ENCODE measurements at regions of chr2 and their contacts with region 1.

Region 1: DNA sequence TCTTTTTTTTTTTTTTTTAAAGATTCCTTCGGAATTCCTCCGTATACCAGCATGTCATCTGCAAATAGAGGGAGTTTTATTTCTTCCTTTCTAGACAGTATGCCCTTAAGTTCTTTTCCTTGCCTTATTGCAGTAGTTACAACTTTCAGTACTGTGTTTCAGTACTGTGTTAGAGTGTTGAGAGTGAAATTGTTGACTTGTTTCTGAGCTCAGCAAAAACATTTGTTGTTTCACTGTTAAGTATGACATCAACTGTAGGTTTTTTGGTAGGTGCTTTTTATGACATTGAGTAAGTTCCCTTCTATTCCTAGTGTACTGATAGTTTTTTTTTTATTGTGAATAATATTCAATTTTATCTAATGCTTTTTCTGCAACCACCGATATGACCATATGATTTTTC is 43.9 kb downstream of the ACVR2A start:
- DNase-seq: no peak
- H3K4me3 ChIP-seq: no peak overlapping the region
- H3K27ac ChIP-seq: no peak overlapping the region
- H3K4me1 ChIP-seq: peaks cover 5 to 33% of the 10 kb centered on the region in 2 donors
- H3K27me3 ChIP-seq: no peaks in the 10 kb centered on the region
- CTCF ChIP-seq: no peak
- POLR2A ChIP-seq: no peak

Region 2: DNA sequence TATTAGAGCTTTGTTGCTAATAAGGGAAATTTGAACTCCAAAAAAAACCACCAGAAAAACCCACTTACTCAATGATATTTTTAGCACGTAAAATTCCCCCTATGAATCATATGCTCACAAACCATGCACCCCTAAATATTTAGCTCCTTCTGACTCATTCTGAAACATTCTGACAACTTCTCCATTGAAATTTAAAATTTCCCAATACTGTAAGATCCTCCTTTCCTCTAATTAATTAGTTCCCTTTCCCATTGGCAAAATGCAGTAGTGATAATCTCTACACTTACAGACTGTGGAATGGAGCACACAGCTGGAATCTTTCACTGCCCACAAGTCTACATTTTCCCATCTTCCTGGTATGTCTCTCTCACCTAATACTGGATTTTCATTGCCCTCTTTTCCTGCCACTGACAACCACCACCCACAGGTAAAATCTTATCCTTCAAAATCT is 259.7 kb before region 1 on chr2:
- intact Hi-C with region 1: no loop called
- DNase-seq: no peak
- H3K4me3 ChIP-seq: no peak overlapping the region
- H3K27ac ChIP-seq: no peak overlapping the region
- H3K4me1 ChIP-seq: no peaks in the 10 kb centered on the region
- H3K27me3 ChIP-seq: no peaks in the 10 kb centered on the region
- CTCF ChIP-seq: no peak
- POLR2A ChIP-seq: no peak

Region 3: DNA sequence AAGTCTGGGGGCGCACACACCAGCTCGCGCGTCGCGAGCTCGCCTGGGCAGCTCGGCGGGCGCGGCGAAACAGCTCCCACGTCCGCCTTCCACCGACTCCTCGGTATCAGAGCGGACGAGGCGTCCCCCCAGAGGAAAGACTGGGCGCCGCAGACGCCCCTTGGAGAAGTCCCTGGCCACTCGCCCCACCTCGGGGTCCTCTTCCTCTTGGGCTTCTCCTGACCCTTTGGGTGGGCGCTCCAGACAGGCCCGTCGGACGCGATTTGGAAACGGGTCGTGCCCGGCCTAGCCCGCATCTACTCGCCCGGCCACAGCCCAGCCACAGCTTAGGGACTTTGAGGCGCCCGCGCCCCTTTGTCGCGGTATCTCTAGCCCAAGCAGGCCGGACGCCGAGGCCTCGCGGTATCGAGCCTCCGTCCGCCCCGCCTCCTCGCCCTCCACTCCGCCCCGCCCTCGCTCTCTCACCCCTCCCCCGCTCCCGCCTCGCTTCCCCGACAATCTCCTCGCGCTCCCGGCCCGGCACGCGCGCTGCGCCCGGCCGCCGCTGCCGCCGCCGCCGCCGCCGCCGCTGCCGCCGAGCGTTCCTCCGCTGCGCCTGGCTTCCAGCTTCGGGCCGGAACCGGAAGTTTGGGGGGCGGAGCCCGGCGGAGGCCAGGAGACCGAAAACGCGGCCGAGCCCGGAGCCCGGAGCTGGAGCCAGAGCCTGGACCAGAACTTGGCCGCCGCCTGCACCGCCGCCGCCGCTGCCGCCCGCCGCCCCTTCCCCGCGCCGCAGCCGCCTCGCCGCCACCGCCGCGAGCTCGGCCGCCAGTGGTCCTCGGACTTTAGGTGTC is 44.6 kb before region 1 on chr2:
- intact Hi-C with region 1: loop called in 1 of 2 experiments (anchors 10 kb)
- DNase-seq: peak; percentile 91 to 95 (median 94)
- H3K4me3 ChIP-seq: peak overlapping the region; percentile 37 to 93 (median 54)
- H3K27ac ChIP-seq: peak overlapping the region; percentile 2 to 98 (median 96)
- H3K4me1 ChIP-seq: peaks cover 5 to 25% of the 10 kb centered on the region in 2 donors
- H3K27me3 ChIP-seq: no peaks in the 10 kb centered on the region
- CTCF ChIP-seq: peak in 4 of 6 experiments; percentile 24 to 42 (median 33)
- POLR2A ChIP-seq: peak; percentile 71 to 90

Measured in adrenal gland (tissue), 19 donors.